Calu3 (cell line): ENCODE measurements at regions of chr2 and their contacts with region 1.

Region 1: DNA sequence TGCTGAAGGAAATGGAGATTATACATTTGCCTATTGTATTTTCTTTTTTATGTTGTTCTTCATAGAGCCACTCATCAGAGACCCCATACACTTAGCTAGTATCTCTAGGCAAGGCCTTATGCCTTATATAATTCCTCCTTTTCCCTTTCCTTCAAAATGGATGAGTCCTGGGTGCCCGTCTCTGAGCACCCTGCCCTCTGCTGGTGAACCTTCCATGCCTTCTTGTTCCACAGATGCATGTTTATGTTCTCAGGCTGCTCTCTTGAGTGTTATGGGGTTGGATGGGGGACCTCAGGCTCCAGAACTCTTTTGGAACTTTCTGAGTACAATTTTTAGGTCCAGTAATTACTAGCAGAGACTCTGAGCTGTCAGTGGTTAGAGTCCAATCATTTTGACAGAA is 368.6 kb upstream of the SPRED2 start:
- DNase-seq: peak; percentile 32
- H3K4me3 Mint-ChIP-seq: no peak overlapping the region
- H3K27ac Mint-ChIP-seq: no peak overlapping the region
- H3K4me1 Mint-ChIP-seq: no peaks in the 10 kb centered on the region
- H3K27me3 Mint-ChIP-seq: peaks cover 30% of the 10 kb centered on the region
- CTCF ChIP-seq: peak; percentile 49

Region 2: GRCh38 chr2:65640793-65641103 is 160.2 kb before region 1 on chr2:
- CTCF ChIA-PET with region 1: interaction called, 4 read pairs
- intact Hi-C with region 1: loop called (anchors 5 kb)
- DNase-seq: no peak
- H3K4me3 Mint-ChIP-seq: peak overlapping the region; percentile 74
- H3K27ac Mint-ChIP-seq: peak overlapping the region; percentile 41
- H3K4me1 Mint-ChIP-seq: no peaks in the 10 kb centered on the region
- H3K27me3 Mint-ChIP-seq: peaks cover 12% of the 10 kb centered on the region
- CTCF ChIP-seq: no peak

Region 3: GRCh38 chr2:65686927-65687521 is 114.0 kb before region 1 on chr2:
- CTCF ChIA-PET with region 1: interaction called, 3 read pairs
- intact Hi-C with region 1: loop called (anchors 5 kb)
- DNase-seq: no peak
- H3K4me3 Mint-ChIP-seq: no peak overlapping the region
- H3K27ac Mint-ChIP-seq: no peak overlapping the region
- H3K4me1 Mint-ChIP-seq: no peaks in the 10 kb centered on the region
- H3K27me3 Mint-ChIP-seq: no peaks in the 10 kb centered on the region
- CTCF ChIP-seq: no peak

Region 4: DNA sequence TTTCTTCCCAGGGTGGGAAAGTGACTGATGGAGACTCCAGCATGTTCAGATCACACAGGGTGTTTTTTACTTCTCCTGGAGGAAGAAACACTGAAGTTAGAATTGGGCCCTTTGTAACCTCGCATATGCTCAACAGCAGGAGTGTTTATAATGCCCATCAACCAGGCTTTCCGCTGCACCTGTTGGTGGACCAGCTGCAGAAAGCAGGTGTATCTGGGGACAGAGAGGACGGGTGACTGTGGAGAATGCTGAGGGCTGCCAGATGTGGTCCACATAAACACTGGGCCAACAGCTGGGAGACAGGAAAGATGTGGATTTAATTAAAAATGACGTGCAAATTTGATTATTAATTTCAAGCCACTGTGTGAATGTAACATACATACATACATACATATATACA is 33.1 kb before region 1 on chr2:
- CTCF ChIA-PET with region 1: no interaction called
- intact Hi-C with region 1: no loop called
- DNase-seq: no peak
- H3K4me3 Mint-ChIP-seq: no peak overlapping the region
- H3K27ac Mint-ChIP-seq: no peak overlapping the region
- H3K4me1 Mint-ChIP-seq: no peaks in the 10 kb centered on the region
- H3K27me3 Mint-ChIP-seq: peaks cover 26% of the 10 kb centered on the region
- CTCF ChIP-seq: no peak

Region 5: DNA sequence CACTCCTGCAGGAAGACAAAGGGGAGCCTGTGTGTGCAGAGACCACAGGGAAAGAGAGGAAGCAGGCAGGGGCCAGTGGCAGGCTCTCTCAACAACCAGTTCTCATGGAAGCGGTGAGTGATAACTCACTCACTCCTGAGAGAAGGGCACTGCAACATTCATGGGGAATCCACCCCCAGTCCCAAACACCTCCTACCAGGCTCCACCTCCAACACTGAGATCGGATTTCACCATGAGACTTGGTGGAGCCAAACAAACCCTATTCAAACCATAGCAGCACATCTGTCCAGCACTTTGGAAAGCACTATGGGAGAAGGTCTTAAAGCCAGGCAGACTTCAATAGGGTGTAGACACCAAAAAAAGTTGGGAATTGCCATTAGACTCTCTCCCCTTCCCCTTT is 22.9 kb before region 1 on chr2:
- CTCF ChIA-PET with region 1: no interaction called
- intact Hi-C with region 1: no loop called
- DNase-seq: no peak
- H3K4me3 Mint-ChIP-seq: no peak overlapping the region
- H3K27ac Mint-ChIP-seq: no peak overlapping the region
- H3K4me1 Mint-ChIP-seq: no peaks in the 10 kb centered on the region
- H3K27me3 Mint-ChIP-seq: peaks cover 27% of the 10 kb centered on the region
- CTCF ChIP-seq: no peak

Region 6: DNA sequence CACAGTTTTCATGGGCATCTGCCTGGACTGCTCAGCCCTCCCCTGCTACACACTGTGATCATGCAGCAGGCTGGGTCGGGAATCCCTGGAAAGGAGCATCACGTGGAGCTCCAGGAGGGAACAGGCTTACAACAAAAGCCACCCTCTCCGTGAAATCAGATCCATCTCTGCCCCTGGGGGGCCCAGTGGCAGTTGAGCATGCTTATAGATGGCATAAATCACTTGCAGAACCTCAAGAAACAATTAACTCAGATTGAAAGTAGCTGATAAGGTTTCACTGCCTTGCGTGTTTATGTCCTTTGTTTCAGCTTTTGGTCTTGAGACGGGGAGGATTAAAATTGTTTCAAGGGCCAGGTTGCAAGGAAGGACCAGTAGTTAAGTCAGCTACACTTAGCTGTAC is 279.1 kb after region 1 on chr2:
- CTCF ChIA-PET with region 1: no interaction called
- intact Hi-C with region 1: no loop called
- DNase-seq: no peak
- H3K4me3 Mint-ChIP-seq: no peak overlapping the region
- H3K27ac Mint-ChIP-seq: no peak overlapping the region
- H3K4me1 Mint-ChIP-seq: no peaks in the 10 kb centered on the region
- H3K27me3 Mint-ChIP-seq: peaks cover 40% of the 10 kb centered on the region
- CTCF ChIP-seq: no peak